A549 (cell line): ENCODE measurements at regions of chr5 and their contacts with region 1.

Region 1: DNA sequence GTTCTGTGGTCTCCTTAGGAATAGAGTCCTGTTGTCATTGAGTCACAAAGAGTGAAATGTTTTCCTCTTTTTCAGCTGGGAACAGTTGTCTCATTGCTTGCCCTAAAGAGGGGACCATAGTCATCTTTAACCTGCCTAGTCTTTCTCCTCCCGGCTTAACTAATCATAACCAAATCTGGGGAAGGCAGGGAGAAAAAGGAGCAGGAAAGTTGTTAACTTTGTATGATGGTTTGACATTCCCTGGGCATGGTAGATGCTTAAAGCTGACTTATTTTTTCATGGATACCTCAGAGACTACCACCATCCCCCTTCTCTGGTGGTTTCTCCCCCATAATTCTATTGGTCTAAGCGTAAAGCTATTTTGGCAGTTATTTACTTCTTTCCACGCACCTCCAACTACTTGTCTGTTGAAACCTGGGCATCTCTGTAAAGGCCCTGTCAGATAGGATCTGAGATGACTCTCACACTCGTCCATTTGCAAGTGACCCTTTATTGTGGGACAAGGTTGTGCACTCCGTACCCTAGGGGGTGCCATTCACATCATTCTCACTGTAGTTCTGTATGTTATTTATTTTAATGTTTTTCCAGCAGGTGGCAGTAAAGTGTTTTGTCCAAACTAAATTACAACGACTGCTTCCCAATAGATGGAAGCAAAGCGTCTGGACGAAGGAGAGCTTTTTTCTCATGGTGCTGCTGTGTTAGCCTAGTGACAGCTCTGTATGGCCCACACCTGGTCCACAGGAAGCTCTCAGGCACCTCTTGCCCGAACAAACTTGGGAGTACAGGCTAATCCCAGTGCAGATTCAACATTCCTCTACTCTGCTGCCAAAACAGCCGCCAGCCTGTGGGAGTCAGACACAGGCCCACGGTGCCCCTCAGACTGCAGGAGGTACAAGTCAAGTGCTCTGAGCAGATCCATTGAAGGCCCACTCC is 3.0 kb upstream of the FAM13B start:
- DNase-seq: peak; percentile 69 to 93
- ATAC-seq: peak; percentile 71 to 79
- H3K4me3 ChIP-seq: no peak overlapping the region
- H3K27ac ChIP-seq: peak overlapping the region; percentile 44 to 65; a peak in 5 of 6 replicates
- H3K4me1 ChIP-seq: peaks cover 17% of the 10 kb centered on the region
- CTCF ChIP-seq: peak; percentile 99
- EP300 ChIP-seq: no peak
- POLR2A ChIP-seq: no peak
- RAD21 ChIP-seq: peak; percentile 84

Region 2: GRCh38 chr5:137997726-137998213 is 38.1 kb before region 1 on chr5:
- CTCF ChIA-PET with region 1: interaction called, 10 read pairs
- POLR2A ChIA-PET with region 1: no interaction called
- DNase-seq: peak in 1 of 2 experiments; percentile 36
- ATAC-seq: no peak
- H3K4me3 ChIP-seq: no peak overlapping the region
- H3K27ac ChIP-seq: peak overlapping the region; percentile 87 to 90; a peak in 4 of 6 replicates
- H3K4me1 ChIP-seq: peaks cover 84% of the 10 kb centered on the region
- CTCF ChIP-seq: no peak
- EP300 ChIP-seq: no peak
- POLR2A ChIP-seq: no peak
- RAD21 ChIP-seq: no peak

Region 3: DNA sequence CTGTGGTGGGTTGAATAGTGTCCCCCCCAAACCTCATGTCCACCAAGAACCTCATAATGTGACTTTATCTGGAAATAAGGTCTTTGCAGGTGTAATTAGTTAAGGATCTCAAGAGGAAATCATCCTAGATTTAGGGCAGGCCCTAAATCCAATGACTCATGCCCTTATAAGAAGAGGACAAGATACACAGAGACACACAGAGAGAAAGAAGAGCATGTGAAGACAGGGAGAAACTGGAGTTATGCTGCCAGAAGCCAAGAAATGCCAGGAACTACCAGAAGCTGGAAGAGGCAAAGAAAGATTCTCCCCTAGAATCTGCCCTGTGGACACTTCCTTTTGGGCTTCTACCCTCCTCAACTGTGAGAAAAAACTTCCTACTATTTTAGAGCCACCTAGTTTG is 11.8 kb before region 1 on chr5:
- CTCF ChIA-PET with region 1: interaction called, 23 read pairs
- POLR2A ChIA-PET with region 1: interaction called, 3 read pairs
- DNase-seq: no peak
- ATAC-seq: peak in 1 of 2 experiments; percentile 54; a peak in 3 of 6 replicates
- H3K4me3 ChIP-seq: no peak overlapping the region
- H3K27ac ChIP-seq: 0 out of 6 replicates have a peak overlapping the region, but pooled peaks of 1 of the 2 experiments have one; percentile 9
- H3K4me1 ChIP-seq: peaks cover 16% of the 10 kb centered on the region
- CTCF ChIP-seq: no peak
- EP300 ChIP-seq: no peak
- POLR2A ChIP-seq: no peak
- RAD21 ChIP-seq: no peak

Region 4: DNA sequence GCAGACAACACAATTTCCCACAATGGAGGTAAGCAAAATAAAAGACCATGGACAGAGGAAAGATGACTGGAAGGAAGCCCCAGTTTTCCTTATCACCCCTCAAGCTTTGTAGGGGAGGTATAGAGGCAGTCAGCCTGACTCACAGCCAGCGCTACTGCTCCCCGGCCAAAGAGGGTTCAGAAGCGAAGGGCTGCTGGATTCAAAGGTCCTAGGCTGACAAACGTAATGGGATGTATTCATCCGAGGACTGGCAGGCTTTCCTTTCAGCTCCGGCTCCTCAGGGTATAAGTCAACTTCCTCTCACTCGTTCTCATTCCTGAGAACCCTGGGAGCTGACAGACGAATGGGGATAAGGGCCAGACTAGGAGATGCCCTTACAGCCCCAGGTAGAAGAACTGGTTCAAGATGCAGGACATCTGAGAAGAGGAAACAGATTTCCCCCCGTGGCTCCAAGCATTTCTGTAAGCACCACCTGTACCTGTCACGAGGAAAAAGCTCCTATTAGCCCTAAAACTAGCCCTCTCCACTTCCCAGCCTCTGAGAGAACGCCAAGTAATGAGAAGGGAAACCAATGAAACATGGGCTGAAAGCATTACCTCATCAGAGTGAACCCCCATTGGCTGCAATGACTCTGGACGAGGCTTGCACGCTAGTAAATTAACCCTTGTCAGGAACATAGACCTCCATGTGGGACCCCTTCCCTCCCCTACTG is 19.1 kb after region 1 on chr5:
- CTCF ChIA-PET with region 1: interaction called, 402 read pairs
- POLR2A ChIA-PET with region 1: no interaction called
- DNase-seq: no peak
- ATAC-seq: peak; percentile 62 to 71
- H3K4me3 ChIP-seq: no peak overlapping the region
- H3K27ac ChIP-seq: no peak overlapping the region
- H3K4me1 ChIP-seq: no peaks in the 10 kb centered on the region
- CTCF ChIP-seq: no peak
- EP300 ChIP-seq: no peak
- POLR2A ChIP-seq: no peak
- RAD21 ChIP-seq: no peak

Region 5: GRCh38 chr5:138128334-138128733 is 92.5 kb after region 1 on chr5:
- CTCF ChIA-PET with region 1: interaction called, 55 read pairs
- POLR2A ChIA-PET with region 1: interaction called, 3 read pairs
- DNase-seq: no peak
- ATAC-seq: no peak
- H3K4me3 ChIP-seq: no peak overlapping the region
- H3K27ac ChIP-seq: no peak overlapping the region
- H3K4me1 ChIP-seq: 0 out of 3 replicates have a peak, but pooled peaks cover 4% of the 10 kb centered on the region
- CTCF ChIP-seq: no peak
- EP300 ChIP-seq: no peak
- POLR2A ChIP-seq: no peak
- RAD21 ChIP-seq: no peak

Region 6: DNA sequence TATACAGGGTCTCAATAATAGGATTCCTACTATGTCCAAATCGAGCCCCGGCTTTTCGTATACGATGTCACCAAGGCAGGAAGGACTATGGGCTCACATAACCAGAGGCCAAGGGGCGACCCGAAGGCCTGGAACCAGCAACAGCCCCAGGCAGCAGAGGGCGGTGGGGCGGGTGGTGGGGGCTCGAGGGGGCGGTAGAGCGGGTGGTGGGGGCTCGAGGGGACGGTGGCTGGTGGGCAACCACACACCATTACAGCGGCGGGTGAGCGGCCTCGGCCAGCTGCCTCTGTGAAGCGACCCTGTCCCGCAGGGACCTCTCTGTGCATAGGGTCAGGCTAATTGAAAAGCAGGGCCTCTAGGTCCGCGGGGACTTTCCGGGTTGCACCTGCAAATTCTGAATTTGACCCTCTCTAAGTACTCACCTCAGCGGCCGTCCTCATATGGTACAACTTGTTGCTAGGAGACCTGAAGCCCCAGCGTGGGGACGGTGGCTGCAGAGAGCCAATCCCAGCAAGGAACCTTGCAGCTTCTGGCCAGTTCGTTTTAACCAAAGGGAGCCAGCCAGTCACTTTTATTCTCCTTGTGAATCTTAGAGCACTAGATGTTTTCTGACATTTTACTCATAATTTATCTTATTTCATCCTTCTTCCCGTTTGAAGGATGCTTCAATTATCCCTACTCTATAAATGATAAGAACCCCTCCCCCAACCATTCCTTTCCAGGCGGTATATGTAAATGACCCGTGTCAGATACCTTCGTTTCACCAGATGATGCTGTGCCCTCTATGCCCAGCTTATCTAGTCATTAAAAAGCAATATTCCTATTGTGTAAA is 103.3 kb after region 1 on chr5 and contains the start of gene NME5:
- CTCF ChIA-PET with region 1: interaction called, 55 read pairs
- POLR2A ChIA-PET with region 1: no interaction called
- DNase-seq: no peak
- ATAC-seq: no peak
- H3K4me3 ChIP-seq: no peak within 1 kb of the TSS
- H3K27ac ChIP-seq: no peak within 1 kb of the TSS
- H3K4me1 ChIP-seq: no peaks in the 10 kb centered on the region
- CTCF ChIP-seq: no peak
- EP300 ChIP-seq: no peak
- POLR2A ChIP-seq: no peak
- RAD21 ChIP-seq: no peak
- polyA plus RNA-seq, gene NME5: not detected in 2 replicates

Region 7: GRCh38 chr5:138352071-138352721 is 316.3 kb after region 1 on chr5 and contains the start of gene KDM3B:
- CTCF ChIA-PET with region 1: no interaction called
- POLR2A ChIA-PET with region 1: no interaction called
- DNase-seq: peak; percentile 87 to 94
- ATAC-seq: peak; percentile 60 to 76
- H3K4me3 ChIP-seq: peak within 1 kb of the TSS; percentile 99
- H3K27ac ChIP-seq: peak within 1 kb of the TSS; percentile 96 to 100
- H3K4me1 ChIP-seq: peaks cover 19% of the 10 kb centered on the region
- CTCF ChIP-seq: peak; percentile 99
- EP300 ChIP-seq: no peak
- POLR2A ChIP-seq: no peak
- RAD21 ChIP-seq: peak; percentile 21 to 31; a peak in 2 of 5 replicates
- polyA plus RNA-seq, gene KDM3B: 50.6 and 52.5 TPM in 2 replicates